Calu3 (cell line): ENCODE measurements at regions of chr11 and their contacts with region 1.

Region 1: GRCh38 chr11:100575870-100576705 is 111.0 kb upstream of the ARHGAP42 start:
- DNase-seq: peak; percentile 19
- H3K4me3 Mint-ChIP-seq: no peak overlapping the region
- H3K27ac Mint-ChIP-seq: no peak overlapping the region
- H3K4me1 Mint-ChIP-seq: no peaks in the 10 kb centered on the region
- H3K27me3 Mint-ChIP-seq: no peaks in the 10 kb centered on the region
- CTCF ChIP-seq: peak; percentile 41

Region 2: GRCh38 chr11:99739464-99740089 is 836.5 kb before region 1 on chr11:
- CTCF ChIA-PET with region 1: no interaction called
- intact Hi-C with region 1: loop called (anchors 10 kb)
- DNase-seq: peak; percentile 21
- H3K4me3 Mint-ChIP-seq: no peak overlapping the region
- H3K27ac Mint-ChIP-seq: no peak overlapping the region
- H3K4me1 Mint-ChIP-seq: no peaks in the 10 kb centered on the region
- H3K27me3 Mint-ChIP-seq: no peaks in the 10 kb centered on the region
- CTCF ChIP-seq: no peak

Region 3: DNA sequence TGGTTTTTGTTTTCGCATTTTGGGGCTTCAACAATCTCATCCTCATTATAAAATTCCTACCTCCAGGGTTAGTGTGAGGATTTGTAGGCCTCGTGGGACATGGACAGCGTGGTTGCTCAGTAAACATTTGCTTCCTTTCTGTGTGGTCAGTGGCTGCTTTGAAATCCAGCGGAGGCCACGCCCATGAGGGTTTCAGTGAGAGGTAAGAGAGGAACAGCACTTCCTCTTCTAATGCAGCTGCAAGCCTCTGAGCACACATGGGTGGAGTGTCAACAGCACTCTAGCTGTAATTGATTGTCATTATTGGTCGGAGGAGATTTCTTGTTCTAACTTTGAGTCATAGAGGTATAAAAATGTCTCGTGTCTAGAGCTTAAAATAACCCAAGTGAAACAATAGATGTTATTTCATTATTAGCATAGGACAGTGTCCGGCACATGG is 105.0 kb after region 1 on chr11:
- CTCF ChIA-PET with region 1: interaction called, 6 read pairs
- intact Hi-C with region 1: loop called (anchors 2 kb)
- DNase-seq: peak; percentile 74
- H3K4me3 Mint-ChIP-seq: no peak overlapping the region
- H3K27ac Mint-ChIP-seq: peak overlapping the region; percentile 60
- H3K4me1 Mint-ChIP-seq: peaks cover 31% of the 10 kb centered on the region
- H3K27me3 Mint-ChIP-seq: no peaks in the 10 kb centered on the region
- CTCF ChIP-seq: no peak

Region 4: GRCh38 chr11:100855466-100856067 is 279.5 kb after region 1 on chr11:
- CTCF ChIA-PET with region 1: interaction called, 7 read pairs
- intact Hi-C with region 1: loop called (anchors 1 kb)
- DNase-seq: no peak
- H3K4me3 Mint-ChIP-seq: no peak overlapping the region
- H3K27ac Mint-ChIP-seq: no peak overlapping the region
- H3K4me1 Mint-ChIP-seq: peaks cover 36% of the 10 kb centered on the region
- H3K27me3 Mint-ChIP-seq: no peaks in the 10 kb centered on the region
- CTCF ChIP-seq: no peak

Region 5: DNA sequence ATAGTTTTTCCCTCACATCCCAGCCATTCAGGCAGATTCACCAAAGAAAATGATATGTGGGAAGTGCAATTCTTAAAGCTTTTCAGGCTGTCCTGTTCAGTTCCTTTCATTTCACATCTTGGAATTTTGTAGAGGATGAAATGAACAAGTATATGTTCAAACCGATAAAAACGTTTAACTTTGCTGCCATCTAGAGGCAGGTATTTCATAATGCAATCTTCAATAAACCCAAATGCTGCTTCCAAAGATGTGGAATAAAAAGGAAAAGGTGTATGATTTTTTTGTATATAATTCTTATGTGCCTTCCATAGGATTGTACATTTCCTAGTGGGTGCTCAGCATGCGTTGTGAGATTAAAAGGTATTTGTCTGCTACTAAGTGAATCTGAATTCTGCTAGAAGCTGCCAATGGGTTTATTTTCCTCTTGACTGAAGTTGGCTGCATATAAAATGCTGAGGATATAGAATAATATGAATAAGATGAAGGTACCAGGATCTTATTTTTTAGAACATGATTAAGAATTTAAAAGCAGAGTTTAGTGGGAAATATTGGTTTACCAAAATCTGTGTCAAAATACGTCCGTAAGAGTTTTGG is 354.2 kb after region 1 on chr11:
- CTCF ChIA-PET with region 1: no interaction called
- intact Hi-C with region 1: loop called (anchors 1 kb)
- DNase-seq: peak; percentile 1
- H3K4me3 Mint-ChIP-seq: no peak overlapping the region
- H3K27ac Mint-ChIP-seq: no peak overlapping the region
- H3K4me1 Mint-ChIP-seq: no peaks in the 10 kb centered on the region
- H3K27me3 Mint-ChIP-seq: no peaks in the 10 kb centered on the region
- CTCF ChIP-seq: no peak

Region 6: DNA sequence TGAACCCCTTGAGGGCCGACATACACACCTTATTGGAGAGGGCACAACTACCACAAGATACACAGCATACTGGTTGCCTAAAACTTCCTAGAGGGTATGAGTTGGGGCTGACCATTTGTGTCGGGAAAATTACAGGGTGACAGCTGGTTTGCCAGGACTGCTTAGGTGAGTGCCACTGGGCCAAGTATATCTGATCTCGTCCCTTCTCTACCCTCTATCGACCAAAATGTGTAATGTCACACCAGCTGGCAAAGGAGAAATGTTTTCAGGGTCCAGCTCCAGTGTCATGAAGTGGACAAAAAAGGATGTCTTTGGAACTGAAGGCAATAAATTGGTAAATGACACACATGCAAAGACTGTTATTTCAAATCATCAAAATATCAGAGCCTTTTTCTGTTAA is 427.4 kb after region 1 on chr11:
- CTCF ChIA-PET with region 1: no interaction called
- intact Hi-C with region 1: loop called (anchors 1 kb)
- DNase-seq: no peak
- H3K4me3 Mint-ChIP-seq: no peak overlapping the region
- H3K27ac Mint-ChIP-seq: no peak overlapping the region
- H3K4me1 Mint-ChIP-seq: no peaks in the 10 kb centered on the region
- H3K27me3 Mint-ChIP-seq: no peaks in the 10 kb centered on the region
- CTCF ChIP-seq: peak; percentile 27